HEK293 (cell line): ENCODE measurements at regions of chr13 and their contacts with region 1.

Region 1: DNA sequence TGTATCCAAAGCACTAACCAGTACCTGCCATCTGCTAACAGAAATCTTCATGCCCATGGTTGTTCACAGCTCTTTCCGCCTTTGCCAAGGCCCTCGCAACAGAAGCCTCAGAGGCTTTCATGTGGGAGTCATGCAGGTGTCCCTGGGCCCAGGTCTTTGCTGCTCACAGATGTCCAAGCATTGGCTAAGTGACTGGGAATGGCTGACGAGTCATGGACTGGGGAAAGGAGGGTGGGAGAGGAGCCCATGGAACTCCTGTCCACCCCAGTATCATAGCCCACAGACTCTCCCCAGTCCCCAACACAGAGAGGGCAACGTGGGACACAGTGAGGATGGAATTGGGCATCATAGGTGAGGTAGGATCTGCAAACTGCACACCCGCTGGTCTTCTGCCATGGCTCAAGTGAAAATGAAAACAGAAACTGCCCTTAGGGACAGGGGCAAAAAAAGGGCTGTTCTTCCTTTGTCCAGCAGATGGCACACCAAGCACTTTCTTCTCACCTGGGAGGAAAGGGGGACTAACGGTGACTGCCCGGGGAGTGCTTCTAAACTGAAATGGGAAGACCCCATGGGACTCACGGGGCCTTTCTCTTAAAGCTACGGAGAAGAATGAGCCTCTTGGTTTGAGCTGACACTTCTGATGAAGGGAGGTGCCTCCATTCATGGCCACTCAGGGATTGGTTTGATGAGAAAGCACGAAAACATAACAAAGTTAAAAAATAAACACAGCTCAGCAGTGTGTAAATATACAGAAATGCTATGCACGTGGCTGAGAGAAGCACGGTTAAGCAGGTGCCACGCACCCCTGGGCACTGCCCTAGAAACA is 11.1 kb upstream of the DHRS12 start:
- H3K4me3 ChIP-seq: peak overlapping the region; percentile 5; the same call in 1 of the 2 replicates
- H3K27ac ChIP-seq: no peak overlapping the region
- H3K4me1 ChIP-seq: no peaks in the 10 kb centered on the region
- CTCF ChIP-seq: no peak

Region 2: DNA sequence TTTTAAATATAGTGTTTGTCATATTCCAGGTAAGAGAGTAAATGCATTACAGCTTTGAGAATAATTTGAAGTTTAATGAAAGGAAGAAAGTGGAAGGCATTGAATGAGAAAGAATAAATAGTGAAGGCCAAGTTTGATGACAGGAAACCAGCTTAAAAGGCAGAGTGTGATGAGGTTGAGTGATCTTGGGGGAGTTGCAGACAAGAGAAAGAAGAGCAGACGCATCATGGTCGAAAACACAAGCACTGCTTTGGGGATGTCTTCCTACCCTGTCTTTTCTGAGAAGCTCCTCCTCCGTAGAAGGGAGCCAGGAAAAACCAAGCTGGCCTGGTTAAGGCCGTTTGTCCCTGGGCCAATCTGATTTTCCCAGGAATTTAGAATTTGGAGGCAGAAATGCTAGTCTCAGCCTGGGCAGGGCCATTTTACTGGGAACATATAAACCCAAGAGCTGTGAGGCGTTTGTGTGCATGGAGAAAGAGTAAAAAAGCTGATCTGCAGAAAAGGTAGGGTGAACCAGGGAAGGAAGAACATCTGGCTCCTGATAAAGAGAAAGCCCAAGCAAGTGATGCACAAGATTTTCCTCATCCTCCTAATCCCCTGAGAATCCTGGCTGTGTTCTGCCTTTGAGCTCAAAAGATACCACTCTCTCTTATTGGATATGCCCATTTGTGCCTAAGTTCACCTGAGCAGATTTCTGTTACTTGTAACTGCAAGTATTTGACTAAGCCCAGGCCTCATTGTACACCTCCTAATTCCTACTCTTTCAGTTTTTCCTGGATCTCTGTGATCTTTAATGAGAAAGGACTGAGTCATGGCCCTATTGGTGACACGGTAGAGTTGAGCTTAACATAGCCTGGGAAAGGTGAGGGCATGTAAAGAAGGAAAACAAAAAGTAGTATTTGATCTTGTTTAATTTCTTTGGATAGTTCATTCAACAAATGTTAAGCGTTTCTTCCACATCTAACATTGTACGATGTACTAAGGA is 150.8 kb before region 1 on chr13:
- CTCF ChIA-PET with region 1: no interaction called
- POLR2A ChIA-PET with region 1: no interaction called
- H3K4me3 ChIP-seq: no peak overlapping the region
- H3K27ac ChIP-seq: no peak overlapping the region
- H3K4me1 ChIP-seq: peaks cover 7% of the 10 kb centered on the region
- CTCF ChIP-seq: no peak

Region 3: GRCh38 chr13:51760592-51760991 is 54.4 kb before region 1 on chr13:
- CTCF ChIA-PET with region 1: no interaction called
- POLR2A ChIA-PET with region 1: no interaction called
- H3K4me3 ChIP-seq: no peak overlapping the region
- H3K27ac ChIP-seq: no peak overlapping the region
- H3K4me1 ChIP-seq: peaks cover 4% of the 10 kb centered on the region; the same call in 1 of the 2 replicates
- CTCF ChIP-seq: no peak

Region 4: GRCh38 chr13:51804295-51805172 is 10.5 kb before region 1 on chr13:
- CTCF ChIA-PET with region 1: interaction called, 16 read pairs
- POLR2A ChIA-PET with region 1: no interaction called
- H3K4me3 ChIP-seq: peak overlapping the region; percentile 77
- H3K27ac ChIP-seq: peak overlapping the region; percentile 88
- H3K4me1 ChIP-seq: peaks cover 12% of the 10 kb centered on the region
- CTCF ChIP-seq: no peak

Region 5: DNA sequence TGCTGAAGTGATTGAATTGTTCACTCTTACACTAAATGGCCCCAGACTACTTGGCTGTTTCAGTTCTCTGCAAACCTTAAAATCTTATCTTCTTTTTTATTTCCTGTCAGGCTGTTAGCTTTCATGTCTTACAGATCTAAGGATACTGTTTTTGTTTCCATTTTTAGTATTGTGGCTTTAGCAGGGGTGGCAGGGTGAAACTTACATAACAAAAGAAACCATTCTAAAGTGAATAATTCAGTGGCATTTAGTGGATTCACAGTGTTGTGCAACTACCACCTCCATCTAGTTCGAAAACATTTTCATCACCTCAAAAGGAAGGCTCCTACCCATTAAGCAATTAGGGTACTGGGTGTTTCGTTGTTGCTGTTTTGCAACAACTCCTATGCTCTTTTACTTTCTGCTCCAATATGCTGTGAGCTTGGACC is 10.1 kb after region 1 on chr13:
- CTCF ChIA-PET with region 1: interaction called, 28 read pairs
- POLR2A ChIA-PET with region 1: no interaction called
- H3K4me3 ChIP-seq: no peak overlapping the region
- H3K27ac ChIP-seq: no peak overlapping the region
- H3K4me1 ChIP-seq: no peaks in the 10 kb centered on the region
- CTCF ChIP-seq: no peak

Region 6: GRCh38 chr13:51832471-51833152 is 17.6 kb after region 1 on chr13:
- CTCF ChIA-PET with region 1: interaction called, 28 read pairs
- POLR2A ChIA-PET with region 1: no interaction called
- H3K4me3 ChIP-seq: no peak overlapping the region
- H3K27ac ChIP-seq: no peak overlapping the region
- H3K4me1 ChIP-seq: no peaks in the 10 kb centered on the region
- CTCF ChIP-seq: no peak

Region 7: DNA sequence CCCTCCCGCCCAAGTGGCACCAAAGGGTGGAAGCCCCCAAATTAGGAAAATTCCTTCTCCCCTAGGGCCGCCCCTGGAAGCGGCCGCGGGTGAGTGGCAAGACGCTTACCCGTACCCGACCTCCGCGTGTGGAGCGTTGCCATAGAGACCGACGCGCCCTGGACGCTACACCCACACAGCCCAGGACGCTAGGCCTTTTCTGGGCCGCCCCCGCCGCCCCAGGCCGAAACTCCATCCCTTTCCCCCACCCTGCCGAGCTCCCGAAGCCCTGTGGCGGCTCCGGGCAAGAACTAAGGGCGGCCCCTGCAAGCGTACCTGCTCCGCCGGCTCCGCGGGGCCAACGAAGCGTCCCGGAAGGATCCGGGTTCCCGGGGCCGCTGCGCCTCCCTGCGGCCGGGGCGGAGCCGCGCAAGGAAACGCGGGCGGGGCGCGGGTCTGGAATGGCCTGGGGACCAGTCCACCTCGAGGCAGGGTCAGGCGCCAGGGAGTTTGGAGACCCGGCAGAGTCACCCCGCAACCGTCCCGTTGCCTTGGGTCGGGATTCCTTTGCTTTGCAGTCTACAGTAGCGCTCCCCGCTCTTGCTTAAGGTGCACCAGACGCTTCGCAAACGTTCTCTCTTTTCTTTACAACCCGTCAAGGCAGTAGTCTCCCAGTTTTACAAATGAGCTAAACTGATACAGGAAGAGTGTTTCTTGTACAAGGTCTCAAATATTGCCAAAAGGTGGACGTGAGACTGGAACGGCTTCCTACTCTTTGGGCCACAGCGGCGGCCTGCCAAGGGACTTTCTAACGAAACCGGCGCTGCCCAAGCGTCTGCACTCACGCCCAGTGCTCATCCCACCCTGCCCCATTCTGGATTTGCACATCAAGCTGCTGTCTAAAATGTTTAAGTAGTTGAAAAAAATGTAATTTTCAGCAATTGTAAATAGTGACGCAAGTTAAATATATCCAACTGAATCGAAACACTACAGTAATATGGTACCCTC is 314.0 kb after region 1 on chr13 and contains the start of gene NEK5:
- CTCF ChIA-PET with region 1: interaction called, 30 read pairs
- POLR2A ChIA-PET with region 1: no interaction called
- H3K4me3 ChIP-seq: peak within 1 kb of the TSS; percentile 70
- H3K27ac ChIP-seq: no peak within 1 kb of the TSS
- H3K4me1 ChIP-seq: no peaks in the 10 kb centered on the region
- CTCF ChIP-seq: peak; percentile 64; the same call in 1 of the 2 replicates